ENCODE measurements at regions of chr7 and their contacts with region 1.

Region 1: DNA sequence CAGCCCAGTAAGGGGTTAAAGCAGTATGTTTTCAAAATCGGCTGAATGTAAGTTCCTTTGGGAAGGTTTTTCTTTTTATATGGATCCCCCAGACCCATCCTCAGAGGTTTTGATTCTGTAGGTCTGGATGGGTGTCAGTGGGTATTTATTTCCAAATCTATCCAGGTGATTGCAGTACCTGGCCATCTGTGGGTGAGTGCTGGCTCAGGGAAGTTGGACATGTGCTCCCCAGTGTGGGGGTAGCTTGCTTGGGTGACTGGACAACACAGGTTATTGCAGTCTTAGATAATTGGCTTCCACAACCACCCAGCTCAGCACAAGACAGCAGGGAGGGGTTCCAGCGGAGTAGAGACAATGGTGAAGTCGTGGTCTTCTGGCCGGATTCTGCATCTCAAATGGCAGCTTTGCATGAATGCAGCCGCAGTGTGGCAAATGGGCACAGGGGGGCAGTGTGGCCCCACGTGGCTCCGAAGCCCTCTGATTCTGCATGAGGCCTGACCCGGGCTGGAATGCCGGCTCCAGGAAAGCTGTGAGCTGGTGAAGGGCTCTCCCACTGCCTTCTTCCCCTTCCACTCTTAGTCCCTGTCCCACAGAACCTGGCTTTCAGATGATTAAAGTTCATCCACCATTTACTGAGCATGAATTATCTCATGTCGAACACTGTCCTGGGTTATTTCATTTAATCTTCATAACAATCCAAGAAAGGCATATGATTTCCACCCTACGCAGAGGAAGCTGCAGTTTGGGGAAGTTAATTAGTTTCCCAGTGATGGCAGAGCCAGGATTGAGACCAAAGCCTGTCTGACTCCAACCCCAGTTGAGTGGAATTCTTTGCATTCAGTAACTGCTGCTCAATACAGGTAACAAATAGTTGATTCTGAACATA is 64.5 kb upstream of the SYPL1 start:
- DNase-seq: peak; percentile 79
- H3K4me3 Mint-ChIP-seq: no peak overlapping the region
- H3K27ac Mint-ChIP-seq: no peak overlapping the region
- H3K4me1 Mint-ChIP-seq: peaks cover 16% of the 10 kb centered on the region
- H3K27me3 Mint-ChIP-seq: peaks cover 11% of the 10 kb centered on the region
- CTCF ChIP-seq: peak; percentile 92

Region 2: GRCh38 chr7:106056513-106057203 is 120.0 kb before region 1 on chr7:
- CTCF ChIA-PET with region 1: interaction called, 22 read pairs
- POLR2A ChIA-PET with region 1: no interaction called
- intact Hi-C with region 1: no loop called
- DNase-seq: peak; percentile 85
- H3K4me3 Mint-ChIP-seq: no peak overlapping the region
- H3K27ac Mint-ChIP-seq: no peak overlapping the region
- H3K4me1 Mint-ChIP-seq: peaks cover 21% of the 10 kb centered on the region
- H3K27me3 Mint-ChIP-seq: no peaks in the 10 kb centered on the region
- CTCF ChIP-seq: peak; percentile 94

Region 3: GRCh38 chr7:106216517-106216922 is 39.9 kb after region 1 on chr7:
- CTCF ChIA-PET with region 1: interaction called, 18 read pairs
- POLR2A ChIA-PET with region 1: interaction called, 10 read pairs
- intact Hi-C with region 1: no loop called
- DNase-seq: peak; percentile 98
- H3K4me3 Mint-ChIP-seq: peak overlapping the region; percentile 66
- H3K27ac Mint-ChIP-seq: peak overlapping the region; percentile 82
- H3K4me1 Mint-ChIP-seq: peaks cover 36% of the 10 kb centered on the region
- H3K27me3 Mint-ChIP-seq: no peaks in the 10 kb centered on the region
- CTCF ChIP-seq: no peak

Region 4: DNA sequence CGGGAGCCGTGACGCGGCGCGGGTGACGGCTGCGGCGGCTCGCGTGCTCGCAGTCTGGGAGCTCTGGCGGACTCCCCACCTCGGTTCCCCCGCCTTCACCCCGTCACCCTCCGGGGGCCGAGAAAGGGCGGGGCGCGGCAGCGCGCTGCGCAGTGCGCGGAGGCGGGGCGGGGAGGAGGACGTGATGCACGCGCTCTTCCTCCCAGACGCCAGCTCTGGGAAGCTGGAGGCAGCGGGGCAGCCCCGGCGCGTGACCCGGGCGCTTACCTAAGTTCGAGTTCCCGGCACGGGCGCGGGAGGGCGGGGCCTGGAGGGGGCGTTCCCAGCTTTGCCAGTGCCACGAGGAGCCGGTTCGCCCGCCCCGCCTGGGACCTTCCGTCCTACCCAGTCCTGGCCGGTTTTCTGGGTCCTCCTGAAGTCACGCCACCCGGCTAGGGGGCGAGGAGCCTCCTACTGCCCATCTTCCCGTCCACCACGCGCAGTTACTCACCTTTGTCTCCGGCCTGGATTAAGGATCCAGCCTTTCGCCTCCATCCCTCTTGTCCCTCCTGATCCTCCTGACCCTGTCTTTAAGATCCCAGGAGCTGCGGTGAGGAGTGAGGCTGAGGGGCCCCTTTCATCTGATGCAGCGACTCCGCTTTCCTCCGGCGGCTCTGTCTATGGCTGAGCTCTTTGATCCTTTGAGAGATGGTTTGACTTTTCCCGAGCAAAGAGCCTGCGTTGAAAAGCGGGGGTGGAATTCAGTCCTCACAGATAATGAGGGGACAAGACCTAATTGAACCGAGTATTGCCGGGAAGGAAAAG is 108.6 kb after region 1 on chr7:
- CTCF ChIA-PET with region 1: interaction called, 18 read pairs
- POLR2A ChIA-PET with region 1: interaction called, 5 read pairs
- intact Hi-C with region 1: loop called (anchors 2 kb)
- DNase-seq: peak; percentile 99
- H3K4me3 Mint-ChIP-seq: peak overlapping the region; percentile 100
- H3K27ac Mint-ChIP-seq: peak overlapping the region; percentile 98
- H3K4me1 Mint-ChIP-seq: peaks cover 17% of the 10 kb centered on the region
- H3K27me3 Mint-ChIP-seq: no peaks in the 10 kb centered on the region
- CTCF ChIP-seq: no peak

Region 5: GRCh38 chr7:106485031-106485551 is 308.4 kb after region 1 on chr7:
- CTCF ChIA-PET with region 1: interaction called, 11 read pairs
- POLR2A ChIA-PET with region 1: no interaction called
- intact Hi-C with region 1: no loop called
- DNase-seq: peak; percentile 31
- H3K4me3 Mint-ChIP-seq: no peak overlapping the region
- H3K27ac Mint-ChIP-seq: peak overlapping the region; percentile 20
- H3K4me1 Mint-ChIP-seq: peaks cover 30% of the 10 kb centered on the region
- H3K27me3 Mint-ChIP-seq: no peaks in the 10 kb centered on the region
- CTCF ChIP-seq: no peak

Region 6: DNA sequence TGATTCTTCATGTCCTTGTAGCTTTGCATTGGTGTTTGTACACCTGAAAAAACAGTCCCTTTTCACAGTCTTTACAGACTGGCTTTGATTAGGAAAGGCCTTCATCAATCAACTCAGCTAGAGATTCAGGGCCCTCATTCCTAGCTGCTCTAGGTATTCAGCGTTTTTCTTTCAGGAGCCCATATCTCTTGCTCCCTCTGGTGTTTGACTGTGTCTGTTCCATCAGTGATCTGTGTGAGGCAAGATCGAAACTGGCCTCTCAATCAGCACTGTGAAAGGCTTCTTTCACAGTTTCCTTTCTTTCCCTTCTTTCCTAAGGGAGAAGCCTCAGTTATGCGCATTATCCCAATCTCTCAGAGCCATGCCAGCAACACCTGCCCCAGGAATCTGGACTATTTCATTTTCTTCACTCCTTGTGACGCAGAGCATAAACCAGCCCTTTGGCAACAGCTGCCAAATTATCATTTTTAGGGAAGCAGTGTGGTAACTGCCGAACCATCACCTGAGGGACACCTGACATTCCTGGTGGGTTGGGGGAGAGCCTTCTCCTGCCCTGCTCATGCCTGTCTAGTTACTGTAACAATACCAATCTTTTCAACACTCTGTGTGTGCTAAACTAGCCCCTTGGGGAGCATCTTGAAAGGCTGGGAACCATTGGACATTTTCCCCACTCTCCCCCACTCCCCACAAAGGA is 560.0 kb after region 1 on chr7:
- CTCF ChIA-PET with region 1: interaction called, 18 read pairs
- POLR2A ChIA-PET with region 1: interaction called, 3 read pairs
- intact Hi-C with region 1: loop called (anchors 1 kb)
- DNase-seq: peak; percentile 84
- H3K4me3 Mint-ChIP-seq: peak overlapping the region; percentile 57
- H3K27ac Mint-ChIP-seq: peak overlapping the region; percentile 86
- H3K4me1 Mint-ChIP-seq: peaks cover 9% of the 10 kb centered on the region
- H3K27me3 Mint-ChIP-seq: no peaks in the 10 kb centered on the region
- CTCF ChIP-seq: peak; percentile 72